ENCODE measurements at regions of chr15 and their contacts with region 1.

Region 1: GRCh38 chr15:84598969-84599368 is 1.8 kb upstream of the ZSCAN2 start:
- DNase-seq: no peak
- H3K4me3 ChIP-seq: no peak overlapping the region
- H3K27ac ChIP-seq: no peak overlapping the region
- H3K4me1 ChIP-seq: no peaks in the 10 kb centered on the region
- H3K27me3 ChIP-seq: no peaks in the 10 kb centered on the region
- CTCF ChIP-seq: peak in 3 of 4 experiments; percentile 42 to 58 (median 46)
- POLR2A ChIP-seq: no peak

Region 2: DNA sequence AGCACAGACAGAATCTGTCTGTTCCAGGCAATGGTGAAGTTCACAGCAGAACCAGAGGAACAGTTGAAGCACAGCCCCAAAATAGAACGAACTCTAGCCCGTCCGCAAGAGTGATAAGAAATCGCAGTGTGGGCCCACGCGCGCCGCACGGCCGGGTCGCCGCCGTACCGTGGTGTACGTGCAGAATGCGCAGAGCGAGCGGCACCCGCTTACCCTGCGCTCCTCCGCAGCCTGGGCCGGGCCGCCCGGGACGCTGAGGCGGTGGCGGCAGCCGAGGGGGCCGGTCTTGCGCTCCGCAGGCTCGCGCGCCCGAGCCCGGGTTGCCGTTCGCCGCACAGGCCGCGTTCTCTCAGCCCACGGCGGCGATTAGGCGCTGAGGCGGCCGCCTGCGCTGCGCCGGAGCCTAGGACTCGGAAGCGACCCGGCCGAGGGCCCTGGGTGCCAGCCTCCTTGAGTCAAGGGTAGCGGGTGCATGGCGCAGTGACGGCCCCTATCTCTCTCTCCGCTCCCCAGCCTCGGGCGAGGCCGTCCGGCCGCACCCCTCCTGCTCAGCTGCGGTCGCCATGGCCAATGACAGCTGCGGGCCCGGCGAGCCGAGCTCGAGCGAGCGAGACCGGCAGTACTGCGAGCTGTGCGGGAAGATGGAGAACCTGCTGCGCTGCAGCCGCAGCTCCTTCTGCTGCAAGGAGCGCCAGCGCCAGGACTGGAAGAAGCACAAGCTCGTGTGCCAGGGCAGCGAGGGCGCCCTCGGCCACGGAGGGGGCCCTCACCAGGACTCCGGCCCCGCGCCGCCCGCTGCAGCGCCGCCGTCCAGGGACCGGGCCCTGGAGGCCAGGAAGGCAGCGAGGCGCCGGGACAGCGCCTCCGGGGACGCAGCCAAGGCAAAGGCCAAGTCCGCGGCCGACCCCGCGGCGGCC is 34.6 kb after region 1 on chr15:
- intact Hi-C with region 1: loop called (anchors 5 kb)
- DNase-seq: peak; percentile 55
- H3K4me3 ChIP-seq: peak overlapping the region; percentile 55 to 56
- H3K27ac ChIP-seq: peak overlapping the region; percentile 94 to 95
- H3K4me1 ChIP-seq: peaks cover 11% of the 10 kb centered on the region
- H3K27me3 ChIP-seq: no peaks in the 10 kb centered on the region
- CTCF ChIP-seq: no peak
- POLR2A ChIP-seq: no peak

Region 3: GRCh38 chr15:84783496-84784251 is 184.7 kb after region 1 on chr15:
- intact Hi-C with region 1: no loop called
- DNase-seq: no peak
- H3K4me3 ChIP-seq: no peak overlapping the region
- H3K27ac ChIP-seq: no peak overlapping the region
- H3K4me1 ChIP-seq: no peaks in the 10 kb centered on the region
- H3K27me3 ChIP-seq: no peaks in the 10 kb centered on the region
- CTCF ChIP-seq: no peak
- POLR2A ChIP-seq: no peak